ENCODE measurements at regions of chr9 and their contacts with region 1.

Region 1: DNA sequence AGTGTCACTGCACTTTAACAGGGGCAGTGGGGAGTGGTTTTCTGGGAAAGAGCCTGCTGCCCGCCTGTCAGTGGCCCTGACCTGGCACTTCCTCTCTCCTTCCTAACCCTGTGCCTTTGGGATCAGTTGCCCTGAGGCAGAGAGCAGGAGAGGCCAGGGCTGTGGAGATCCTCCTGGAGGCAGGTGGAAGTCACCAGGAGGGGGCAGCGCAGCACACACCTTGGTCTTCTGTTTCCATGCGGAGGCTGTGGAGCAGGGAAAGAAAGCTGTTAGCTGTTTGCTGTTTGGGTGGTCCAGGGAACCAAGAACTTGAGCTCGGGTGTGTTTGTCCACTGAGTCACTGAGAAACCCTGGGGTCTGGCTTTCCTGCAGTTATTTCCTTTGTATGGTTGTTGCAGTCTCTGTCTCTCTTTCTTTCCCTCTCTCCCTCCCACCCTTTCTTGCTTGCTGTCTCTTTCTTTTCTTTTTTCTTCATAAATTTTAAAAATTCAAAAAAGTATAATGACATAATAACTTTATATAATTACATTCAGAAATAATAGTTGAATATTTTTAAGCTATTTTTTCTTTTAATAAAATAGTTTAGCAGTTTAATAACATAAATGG is 28.1 kb downstream of the NTRK2 start:
- DNase-seq: peak; percentile 78
- H3K4me3 Mint-ChIP-seq: no peak overlapping the region
- H3K27ac Mint-ChIP-seq: no peak overlapping the region
- H3K4me1 Mint-ChIP-seq: no peaks in the 10 kb centered on the region
- H3K27me3 Mint-ChIP-seq: no peaks in the 10 kb centered on the region
- CTCF ChIP-seq: peak; percentile 53

Region 2: DNA sequence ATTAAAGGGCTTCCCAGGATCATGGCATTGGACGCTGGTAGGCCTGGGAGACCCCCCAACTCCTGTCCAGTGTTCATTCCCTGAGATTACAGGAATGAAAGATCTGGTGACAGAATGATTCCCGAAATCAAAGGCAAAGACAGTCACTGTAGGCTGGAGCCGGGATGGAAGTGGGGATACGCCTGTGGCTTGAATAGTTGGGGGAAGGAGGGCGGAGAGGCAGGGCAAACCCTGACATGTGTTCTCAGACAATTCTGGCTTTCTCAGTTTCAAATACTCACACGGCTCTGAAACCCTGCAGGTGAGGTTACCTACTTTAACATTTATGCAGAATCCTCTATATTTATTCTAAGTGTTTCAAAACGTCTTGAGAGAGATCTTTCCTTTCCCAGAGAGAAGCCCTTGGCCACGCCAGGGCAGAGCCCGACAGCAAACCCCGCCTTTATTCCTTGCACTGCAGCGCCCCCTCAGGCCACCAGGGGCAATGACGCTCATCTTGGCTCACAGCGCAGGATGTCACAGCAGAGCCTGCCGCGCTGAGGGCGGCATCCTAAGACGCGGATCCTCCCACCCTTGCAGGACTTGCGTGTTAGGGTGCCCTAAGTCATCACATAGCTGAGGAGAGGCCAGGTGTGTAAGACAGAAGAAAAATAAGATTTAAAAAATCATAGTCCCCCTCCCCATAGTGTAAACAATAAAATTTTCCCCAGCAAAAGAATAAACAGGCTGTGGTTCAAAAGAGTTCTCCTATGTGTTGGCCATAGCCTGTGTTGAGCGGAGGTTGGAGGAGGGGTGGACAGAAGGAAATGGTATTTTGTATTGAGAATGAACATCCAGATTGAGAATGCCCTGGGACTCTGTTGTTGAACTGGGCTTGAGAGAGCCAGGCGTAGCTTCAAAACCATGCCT is 256.4 kb after region 1 on chr9:
- CTCF ChIA-PET with region 1: interaction called, 3 read pairs
- intact Hi-C with region 1: loop called (anchors 5 kb)
- DNase-seq: peak; percentile 77
- H3K4me3 Mint-ChIP-seq: no peak overlapping the region
- H3K27ac Mint-ChIP-seq: no peak overlapping the region
- H3K4me1 Mint-ChIP-seq: peaks cover 9% of the 10 kb centered on the region
- H3K27me3 Mint-ChIP-seq: no peaks in the 10 kb centered on the region
- CTCF ChIP-seq: peak; percentile 75

Measured in Calu3 (cell line).